ENCODE measurements at regions of chr5 and their contacts with region 1.

Region 1: DNA sequence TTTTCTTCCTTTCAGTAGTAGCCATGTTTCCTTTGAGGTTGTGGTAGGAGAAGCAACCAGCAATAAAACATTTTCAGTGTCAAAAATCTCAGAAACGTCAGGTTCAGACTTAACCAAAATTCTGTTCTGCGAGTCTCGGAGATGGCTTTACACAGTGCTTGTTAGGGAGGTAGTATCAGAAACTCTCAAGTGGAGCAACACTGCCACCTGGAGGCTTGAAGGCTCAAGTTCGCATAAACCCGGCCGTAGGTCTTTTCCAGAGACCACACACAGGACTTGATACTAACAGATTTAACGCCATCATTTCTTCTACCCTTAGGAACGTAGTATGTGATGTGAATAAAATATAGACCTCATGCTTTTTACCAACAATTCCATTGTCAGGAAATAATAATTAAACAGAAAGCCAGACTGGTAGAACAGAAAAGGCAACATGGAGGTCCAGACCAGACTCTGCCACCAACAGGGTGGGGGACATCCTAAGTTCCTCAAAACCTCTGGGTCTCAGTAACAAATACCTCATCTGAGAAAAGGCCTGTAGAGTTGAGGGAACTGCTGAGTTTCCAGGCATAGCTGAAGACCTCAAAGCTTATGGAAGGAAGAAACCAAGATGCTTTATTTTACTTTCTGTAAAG is 8.5 kb downstream of the PTGER4 start:
- DNase-seq: peak; percentile 86
- ATAC-seq: peak; percentile 95

Region 2: GRCh38 chr5:39578887-39579497 is 1109.3 kb before region 1 on chr5:
- intact Hi-C with region 1: loop called (anchors 5 kb)
- DNase-seq: no peak
- ATAC-seq: no peak

Region 3: GRCh38 chr5:39714036-39714698 is 974.1 kb before region 1 on chr5:
- intact Hi-C with region 1: loop called (anchors 10 kb)
- DNase-seq: no peak
- ATAC-seq: peak; percentile 74

Region 4: GRCh38 chr5:39948867-39949468 is 739.3 kb before region 1 on chr5:
- intact Hi-C with region 1: loop called (anchors 5 kb)
- DNase-seq: peak; percentile 20
- ATAC-seq: peak; percentile 78

Region 5: DNA sequence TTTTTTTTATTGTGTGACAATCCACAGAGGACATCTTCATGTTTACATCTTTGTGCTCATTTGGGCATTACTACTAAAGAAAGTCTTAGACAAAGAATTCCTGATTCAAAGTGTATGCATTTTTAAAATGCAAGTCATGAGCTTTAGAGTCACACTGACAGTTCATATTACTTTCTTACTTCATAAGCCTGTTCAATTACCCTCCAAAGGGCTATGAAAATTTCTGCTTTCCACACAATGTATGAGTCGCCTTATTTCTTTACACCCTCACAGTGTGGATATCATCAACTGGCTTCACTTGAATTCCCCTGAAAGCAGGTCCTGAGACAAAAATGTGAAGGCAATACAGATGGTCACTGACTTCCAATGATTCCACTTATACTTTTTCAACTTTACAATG is 288.9 kb before region 1 on chr5:
- intact Hi-C with region 1: loop called (anchors 10 kb)
- DNase-seq: no peak
- ATAC-seq: no peak